Heart right ventricle (tissue), 16 donors: ENCODE measurements at regions of chr11 and their contacts with region 1.

Region 1: GRCh38 chr11:15909937-15910598 is 446.3 kb downstream of the SOX6 start:
- DNase-seq: no peak
- ATAC-seq: no peak
- H3K4me3 ChIP-seq: no peak overlapping the region
- H3K27ac ChIP-seq: no peak overlapping the region
- H3K4me1 ChIP-seq: peaks cover 0 to 31% (median 5%) of the 10 kb centered on the region in 9 donors
- H3K27me3 ChIP-seq: no peaks in the 10 kb centered on the region
- CTCF ChIP-seq: no peak

Region 2: GRCh38 chr11:15920856-15921629 is 11.0 kb after region 1 on chr11:
- intact Hi-C with region 1: loop called in 1 of 10 experiments (anchors 1 kb)
- DNase-seq: peak; percentile 22 to 46
- ATAC-seq: peak; percentile 67 to 91 (median 84)
- H3K4me3 ChIP-seq: no peak overlapping the region
- H3K27ac ChIP-seq: peak overlapping the region in 2 of 10 donors; percentile 14 to 22
- H3K4me1 ChIP-seq: peaks cover 0 to 8% (median 0%) of the 10 kb centered on the region in 9 donors
- H3K27me3 ChIP-seq: no peaks in the 10 kb centered on the region
- CTCF ChIP-seq: no peak

Region 3: DNA sequence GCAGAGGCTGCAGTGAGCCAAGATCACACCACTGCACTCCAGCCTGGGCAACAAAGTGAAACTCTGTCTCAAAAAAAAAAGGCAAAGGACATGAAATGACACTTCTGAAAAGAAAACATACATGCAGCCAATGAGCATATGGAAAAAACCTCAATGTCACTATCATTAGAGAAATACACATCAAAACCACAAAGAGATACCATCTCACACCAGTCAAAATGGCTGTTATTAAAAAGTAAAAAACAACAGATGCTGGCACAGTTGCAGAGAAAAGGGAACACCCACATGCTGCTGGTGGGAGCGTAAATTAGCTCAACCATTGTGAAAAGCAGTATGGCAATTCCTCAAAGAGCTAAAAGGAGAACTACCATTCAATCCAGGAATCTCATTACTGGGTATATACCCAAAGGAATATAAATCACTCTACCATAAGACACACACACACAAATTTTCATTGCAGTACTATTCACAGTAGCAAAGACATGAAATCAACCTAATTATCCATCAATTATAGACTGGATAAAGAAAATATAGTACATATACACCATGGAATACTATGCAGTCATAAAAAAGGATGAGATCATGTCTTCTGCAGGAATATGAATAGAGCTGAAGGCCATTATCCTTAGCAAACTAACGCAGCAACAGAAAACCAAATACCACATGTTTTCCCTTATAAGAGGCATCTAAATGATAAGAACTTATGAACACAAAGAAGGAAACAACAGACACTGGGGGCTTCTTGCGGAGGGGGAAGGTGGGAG is 812.7 kb after region 1 on chr11:
- intact Hi-C with region 1: no loop called
- DNase-seq: no peak
- ATAC-seq: no peak
- H3K4me3 ChIP-seq: no peak overlapping the region
- H3K27ac ChIP-seq: no peak overlapping the region
- H3K4me1 ChIP-seq: no peaks in the 10 kb centered on the region
- H3K27me3 ChIP-seq: no peaks in the 10 kb centered on the region
- CTCF ChIP-seq: no peak